AG04450 (cell line): ENCODE measurements at regions of chr1 and their contacts with region 1.

Region 1: GRCh38 chr1:114282751-114283403 is 129.2 kb upstream of the SYT6 start:
- DNase-seq: peak; percentile 81
- H3K4me3 ChIP-seq: no peak overlapping the region
- H3K27ac ChIP-seq: no peak overlapping the region
- H3K27me3 ChIP-seq: peaks cover 10% of the 10 kb centered on the region
- CTCF ChIP-seq: peak; percentile 97

Region 2: DNA sequence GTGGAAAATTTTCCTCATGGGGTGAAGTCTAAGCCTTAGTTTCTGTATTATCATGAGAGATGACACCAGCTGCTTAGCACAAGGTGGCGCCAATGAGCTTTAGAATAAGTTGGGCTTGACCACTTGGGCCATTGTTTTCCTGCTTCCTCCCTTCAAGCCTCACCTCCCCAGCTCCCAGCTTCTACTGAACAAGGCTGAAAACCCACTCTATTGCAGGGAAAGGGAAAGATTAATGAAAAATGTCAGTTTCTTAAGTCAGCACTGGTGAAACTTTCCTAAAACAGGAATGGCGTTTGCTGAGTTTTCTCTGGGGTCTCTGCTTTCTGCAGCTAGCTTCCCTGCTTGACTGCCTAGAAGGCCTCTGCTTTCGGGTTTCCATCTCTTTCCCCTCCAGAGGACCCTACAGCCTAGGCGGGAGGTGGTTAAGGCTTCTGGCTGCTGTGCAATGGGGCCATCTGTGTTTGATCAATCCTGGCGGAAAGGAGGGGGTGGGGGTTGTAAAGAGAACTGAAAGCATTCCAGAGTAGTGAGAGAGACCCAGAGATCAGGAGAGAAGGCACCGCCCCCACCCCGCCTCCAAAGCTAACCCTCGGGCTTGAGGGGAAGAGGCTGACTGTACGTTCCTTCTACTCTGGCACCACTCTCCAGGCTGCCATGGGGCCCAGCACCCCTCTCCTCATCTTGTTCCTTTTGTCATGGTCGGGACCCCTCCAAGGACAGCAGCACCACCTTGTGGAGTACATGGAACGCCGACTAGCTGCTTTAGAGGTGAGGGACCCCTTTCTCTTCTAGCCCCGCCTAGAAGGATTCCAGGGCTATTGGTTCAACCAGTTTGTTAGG is 303.8 kb before region 1 on chr1 and contains the start of gene OLFML3:
- CTCF ChIA-PET with region 1: interaction called, 122 read pairs
- POLR2A ChIA-PET with region 1: interaction called, 10 read pairs
- DNase-seq: peak; percentile 91
- H3K4me3 ChIP-seq: peak within 1 kb of the TSS; percentile 70
- H3K27ac ChIP-seq: peak within 1 kb of the TSS; percentile 99
- H3K27me3 ChIP-seq: no peaks in the 10 kb centered on the region
- CTCF ChIP-seq: peak; percentile 70
- polyA plus RNA-seq, gene OLFML3: 90.3 and 105 TPM in 2 replicates

Region 3: GRCh38 chr1:114009393-114009792 is 273.5 kb before region 1 on chr1:
- CTCF ChIA-PET with region 1: interaction called, 13 read pairs
- POLR2A ChIA-PET with region 1: no interaction called
- DNase-seq: no peak
- H3K4me3 ChIP-seq: no peak overlapping the region
- H3K27ac ChIP-seq: no peak overlapping the region
- H3K27me3 ChIP-seq: peaks cover 4% of the 10 kb centered on the region
- CTCF ChIP-seq: no peak

Region 4: DNA sequence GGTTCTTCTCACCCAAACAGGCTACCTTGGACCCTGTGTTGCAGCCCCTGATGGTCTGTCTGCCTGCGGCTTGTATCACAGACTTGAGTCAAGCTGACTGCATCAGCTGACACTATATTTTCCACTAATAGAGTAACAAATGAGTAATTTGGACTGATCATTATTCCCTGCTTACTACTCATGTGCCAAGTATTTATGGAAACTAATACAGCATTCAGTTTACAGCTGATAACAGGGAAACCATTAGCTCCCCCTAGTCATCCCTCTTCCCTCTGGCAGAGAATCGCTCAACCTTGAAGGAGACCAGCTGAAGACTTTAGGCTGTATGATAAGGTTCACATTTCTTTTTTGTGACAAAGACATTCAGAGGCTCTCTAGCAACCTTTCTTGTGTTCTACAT is 12.6 kb before region 1 on chr1:
- CTCF ChIA-PET with region 1: interaction called, 35 read pairs
- POLR2A ChIA-PET with region 1: no interaction called
- DNase-seq: no peak
- H3K4me3 ChIP-seq: no peak overlapping the region
- H3K27ac ChIP-seq: no peak overlapping the region
- H3K27me3 ChIP-seq: no peaks in the 10 kb centered on the region
- CTCF ChIP-seq: no peak

Region 5: GRCh38 chr1:114320586-114320985 is 37.7 kb after region 1 on chr1:
- CTCF ChIA-PET with region 1: interaction called, 33 read pairs
- POLR2A ChIA-PET with region 1: no interaction called
- DNase-seq: peak; percentile 65
- H3K4me3 ChIP-seq: no peak overlapping the region
- H3K27ac ChIP-seq: no peak overlapping the region
- H3K27me3 ChIP-seq: no peaks in the 10 kb centered on the region
- CTCF ChIP-seq: no peak

Region 6: DNA sequence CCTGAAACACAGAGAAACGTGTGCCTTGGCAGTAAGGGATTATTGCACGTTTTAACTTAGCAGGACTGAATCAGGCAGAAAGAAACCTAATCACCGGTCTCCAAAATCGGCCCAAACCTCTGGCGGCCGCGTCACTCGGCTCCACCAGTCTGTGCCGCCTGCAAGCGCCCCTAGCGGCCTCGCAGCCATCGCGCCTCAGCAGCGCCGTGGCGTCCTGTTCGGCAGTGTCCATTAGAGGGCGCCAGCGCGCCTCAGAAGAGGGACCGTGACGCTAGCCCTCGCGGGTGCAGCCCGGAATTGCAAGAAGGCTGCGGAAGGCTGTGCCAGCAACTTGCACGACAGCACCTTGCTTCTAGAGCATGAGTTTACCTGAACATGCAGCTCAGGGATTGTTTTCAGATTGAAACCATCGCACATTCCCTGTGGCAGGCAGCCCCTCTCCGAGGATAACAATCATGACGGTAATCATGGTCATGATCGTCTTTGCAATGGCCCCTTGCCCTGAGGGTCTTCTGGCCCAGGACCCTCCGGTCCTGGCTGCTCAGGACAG is 63.7 kb after region 1 on chr1:
- CTCF ChIA-PET with region 1: interaction called, 15 read pairs
- POLR2A ChIA-PET with region 1: no interaction called
- DNase-seq: peak; percentile 83
- H3K4me3 ChIP-seq: peak overlapping the region; percentile 59
- H3K27ac ChIP-seq: peak overlapping the region; percentile 2
- H3K27me3 ChIP-seq: peaks cover 8% of the 10 kb centered on the region
- CTCF ChIP-seq: peak; percentile 100